Heart right ventricle (tissue), 16 donors: ENCODE measurements at regions of chr19 and their contacts with region 1.

Region 1: DNA sequence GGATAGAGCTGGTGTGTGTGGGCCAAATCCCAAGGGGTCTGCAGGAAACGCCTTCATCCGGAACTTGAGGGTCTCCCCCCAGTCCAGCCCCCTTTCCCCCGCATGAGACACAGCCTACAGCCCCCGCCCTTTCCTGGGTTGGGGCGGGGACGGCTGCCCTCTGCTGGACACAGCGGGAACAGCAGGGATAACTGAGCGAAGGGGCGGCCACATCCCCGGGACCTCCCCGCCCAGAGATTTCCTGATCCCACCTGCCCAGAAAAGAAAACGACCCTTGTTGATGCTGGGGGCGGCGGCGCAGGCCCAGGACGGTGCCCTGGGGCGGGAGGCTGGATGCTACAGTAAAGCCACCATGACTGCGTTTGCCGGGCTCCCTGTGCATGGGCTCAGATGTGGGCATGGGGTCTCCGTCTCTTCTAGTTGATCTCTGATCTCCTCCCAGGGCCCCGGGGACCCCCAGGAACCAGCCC is 14.2 kb downstream of the ONECUT3 start:
- DNase-seq: peak; percentile 21 to 48
- ATAC-seq: peak in 7 of 8 donors; percentile 65 to 83 (median 73)
- H3K4me3 ChIP-seq: no peak overlapping the region
- H3K27ac ChIP-seq: no peak overlapping the region
- H3K4me1 ChIP-seq: peaks cover 0 to 6% (median 0%) of the 10 kb centered on the region in 9 donors
- H3K27me3 ChIP-seq: peaks cover 22 to 100% (median 98%) of the 10 kb centered on the region in 7 donors
- CTCF ChIP-seq: peak; percentile 81 to 97 (median 94)

Region 2: DNA sequence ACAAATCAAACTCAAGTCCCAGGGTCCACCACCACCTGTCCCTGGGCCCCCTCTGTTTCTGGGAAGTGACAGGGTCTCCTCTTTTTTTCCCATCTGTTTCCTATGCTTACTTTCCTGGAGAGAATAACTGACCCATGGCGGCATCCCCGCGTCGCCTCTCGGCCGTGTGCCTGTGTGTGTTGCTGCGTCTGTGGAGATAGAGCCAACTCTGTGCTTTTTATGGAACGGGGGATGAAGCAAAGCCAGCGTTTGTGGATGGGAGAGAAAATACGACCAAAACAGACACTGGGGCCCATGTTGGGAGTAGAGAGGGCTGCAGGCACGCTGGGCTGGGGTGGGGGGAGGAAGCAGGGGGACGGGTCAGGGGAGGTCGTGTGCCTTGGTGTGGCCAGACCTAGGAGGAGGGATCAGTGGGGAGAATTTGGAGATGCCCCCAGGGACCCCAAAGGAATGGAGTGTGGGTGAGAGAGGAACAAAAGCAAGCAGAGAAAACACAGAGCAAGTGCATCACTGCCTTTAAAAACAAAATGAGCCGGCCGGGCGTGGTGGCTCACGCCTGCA is 227.1 kb before region 1 on chr19:
- intact Hi-C with region 1: loop called in 5 of 10 experiments (anchors 5 to 10 kb)
- DNase-seq: no peak
- ATAC-seq: peak in 7 of 8 donors; percentile 43 to 79 (median 67)
- H3K4me3 ChIP-seq: no peak overlapping the region
- H3K27ac ChIP-seq: peak overlapping the region in 2 of 10 donors; percentile 44 to 58
- H3K4me1 ChIP-seq: peaks cover 0 to 22% (median 4%) of the 10 kb centered on the region in 9 donors
- H3K27me3 ChIP-seq: peaks cover 0 to 23% (median under 1%) of the 10 kb centered on the region in 7 donors
- CTCF ChIP-seq: no peak

Region 3: DNA sequence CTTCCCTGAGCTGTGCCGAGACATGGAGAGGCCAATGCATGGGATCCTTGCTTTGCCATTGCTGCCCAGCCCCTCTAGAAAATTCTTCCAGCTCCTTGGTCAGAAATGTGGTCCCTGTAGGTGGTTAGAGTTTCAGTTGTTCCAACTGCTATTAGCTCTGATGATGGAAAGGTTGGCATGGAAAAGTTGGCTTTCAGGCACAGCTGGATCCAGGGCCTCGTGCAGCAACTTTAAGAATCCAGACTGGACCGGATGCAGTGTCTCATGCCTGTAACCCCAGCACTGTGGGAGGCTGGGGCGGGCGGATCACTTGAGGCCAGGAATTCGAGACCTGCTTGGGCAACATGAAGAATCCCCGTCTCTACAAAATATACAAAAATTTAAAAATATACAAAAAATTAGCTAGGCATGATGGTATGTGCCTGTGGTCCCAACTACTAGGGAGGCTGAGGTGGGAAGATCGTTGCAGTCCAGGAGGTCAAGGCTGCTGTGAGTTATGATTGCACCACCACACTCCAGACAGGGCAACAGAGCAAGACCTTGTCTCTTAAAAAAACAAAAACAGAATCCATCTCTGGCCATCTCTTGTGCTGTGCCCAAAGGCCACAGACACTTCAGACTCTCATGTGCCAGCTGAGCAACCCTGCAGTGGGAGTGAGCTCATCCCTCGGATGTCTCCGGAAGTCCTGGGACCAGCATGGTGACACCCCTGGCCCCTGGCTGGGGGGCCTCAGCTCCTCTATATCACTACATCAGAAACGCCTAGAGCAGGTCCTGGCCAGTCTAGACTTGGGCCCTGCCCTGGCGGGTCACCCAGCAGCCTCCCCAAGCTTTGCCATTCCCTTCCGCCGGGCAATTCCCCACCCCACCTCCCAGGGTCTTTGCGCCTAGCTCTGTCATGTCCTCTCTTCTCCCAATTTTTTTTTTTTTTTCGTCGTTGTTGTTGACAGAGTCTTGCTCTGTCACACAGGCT is 216.1 kb before region 1 on chr19:
- intact Hi-C with region 1: loop called in 8 of 10 experiments (anchors 1 to 10 kb)
- DNase-seq: no peak
- ATAC-seq: no peak
- H3K4me3 ChIP-seq: no peak overlapping the region
- H3K27ac ChIP-seq: no peak overlapping the region
- H3K4me1 ChIP-seq: peaks cover 0 to 1% (median under 1%) of the 10 kb centered on the region in 9 donors
- H3K27me3 ChIP-seq: peaks cover 0 to 7% (median under 1%) of the 10 kb centered on the region in 7 donors
- CTCF ChIP-seq: no peak

Region 4: GRCh38 chr19:1605236-1606137 is 162.0 kb before region 1 on chr19 and contains the start of gene UQCR11:
- intact Hi-C with region 1: loop called in 1 of 10 experiments (anchors 10 kb)
- DNase-seq: peak; percentile 94 to 96
- ATAC-seq: peak; percentile 94 to 98 (median 97)
- H3K4me3 ChIP-seq: peak within 1 kb of the TSS; percentile 92 to 100 (median 96)
- H3K27ac ChIP-seq: peak within 1 kb of the TSS; percentile 88 to 100 (median 97)
- H3K4me1 ChIP-seq: peaks cover 12 to 49% (median 35%) of the 10 kb centered on the region in 9 donors
- H3K27me3 ChIP-seq: no peaks in the 10 kb centered on the region
- CTCF ChIP-seq: peak; percentile 20 to 76 (median 59)
- total RNA-seq, gene UQCR11: 569 to 1,132 (median 804) TPM

Region 5: DNA sequence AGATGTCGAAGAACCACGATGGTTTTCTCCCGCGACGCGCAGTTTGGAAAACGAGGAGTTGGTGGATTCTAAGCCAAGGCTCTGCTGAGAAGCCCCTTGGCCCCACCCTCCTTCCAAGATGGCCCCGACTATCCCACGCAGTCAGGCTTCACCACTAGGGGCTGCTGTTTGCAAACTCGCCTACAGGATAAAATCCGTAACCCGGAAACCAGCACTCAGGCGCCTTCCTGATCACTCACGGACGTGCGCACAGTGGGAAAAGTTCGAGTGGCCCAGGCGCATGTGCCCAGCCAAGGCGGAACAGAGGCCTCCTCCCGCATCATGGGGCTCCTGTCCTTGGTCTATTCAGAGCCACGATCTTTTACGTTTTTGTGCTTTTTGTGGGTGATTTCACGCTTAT is 143.0 kb before region 1 on chr19:
- intact Hi-C with region 1: loop called in 1 of 10 experiments (anchors 5 kb)
- DNase-seq: peak; percentile 48 to 50
- ATAC-seq: peak in 6 of 8 donors; percentile 35 to 73 (median 59)
- H3K4me3 ChIP-seq: no peak overlapping the region
- H3K27ac ChIP-seq: no peak overlapping the region
- H3K4me1 ChIP-seq: no peaks in the 10 kb centered on the region
- H3K27me3 ChIP-seq: no peaks in the 10 kb centered on the region
- CTCF ChIP-seq: peak in 7 of 9 donors; percentile 46 to 64 (median 54)

Region 6: GRCh38 chr19:1725100-1726064 is 42.1 kb before region 1 on chr19:
- intact Hi-C with region 1: no loop called
- DNase-seq: peak in 1 of 2 donors; percentile 60
- ATAC-seq: peak in 5 of 8 donors; percentile 51 to 88 (median 62)
- H3K4me3 ChIP-seq: peak overlapping the region in 9 of 10 donors; percentile 32 to 54 (median 47)
- H3K27ac ChIP-seq: no peak overlapping the region
- H3K4me1 ChIP-seq: peaks cover 0 to 10% (median 6%) of the 10 kb centered on the region in 9 donors
- H3K27me3 ChIP-seq: peaks cover 0 to 96% (median 82%) of the 10 kb centered on the region in 7 donors
- CTCF ChIP-seq: no peak

Region 7: DNA sequence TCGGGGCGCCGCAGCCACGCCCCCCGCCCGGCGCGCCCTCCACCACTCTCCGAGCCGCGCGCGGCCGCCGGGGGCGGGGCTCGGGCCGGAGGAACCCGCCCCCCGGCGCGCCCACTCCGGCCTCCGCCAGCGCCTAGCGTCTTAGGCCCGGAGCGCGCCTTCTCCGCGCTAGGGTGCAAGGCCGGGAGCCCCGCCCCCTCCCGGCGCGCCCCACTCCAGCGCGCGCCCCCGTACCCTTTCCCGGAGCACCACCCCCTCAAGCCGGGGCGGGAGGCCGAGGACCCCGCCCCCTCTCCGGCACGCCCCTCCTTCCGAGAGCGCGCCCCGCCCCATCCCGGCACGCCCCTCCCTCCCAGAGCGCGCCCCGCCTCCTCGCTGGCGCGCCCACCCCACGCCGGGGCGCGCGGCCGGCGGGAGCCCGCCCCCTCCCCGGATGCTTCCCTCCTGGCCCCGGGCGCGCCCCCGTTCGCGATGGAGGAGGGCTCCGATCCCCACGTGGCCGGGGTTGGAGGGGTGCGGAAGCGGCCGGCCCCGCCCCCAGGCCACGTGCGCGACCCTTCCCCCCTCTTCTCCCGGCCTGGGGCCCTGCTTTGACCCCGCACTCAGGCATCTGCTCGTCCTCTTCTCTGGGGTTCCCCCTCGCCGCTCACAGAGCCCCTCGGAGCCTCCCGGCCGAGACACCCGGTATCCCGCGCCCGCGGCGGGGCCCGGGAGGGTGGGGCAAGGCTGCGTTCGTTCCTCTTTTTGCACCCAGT is 96.4 kb after region 1 on chr19:
- intact Hi-C with region 1: no loop called
- DNase-seq: peak; percentile 90 to 91
- ATAC-seq: peak; percentile 82 to 87 (median 84)
- H3K4me3 ChIP-seq: peak overlapping the region; percentile 42 to 96 (median 82)
- H3K27ac ChIP-seq: peak overlapping the region; percentile 21 to 99 (median 94)
- H3K4me1 ChIP-seq: peaks cover 18 to 48% (median 36%) of the 10 kb centered on the region in 9 donors
- H3K27me3 ChIP-seq: no peaks in the 10 kb centered on the region
- CTCF ChIP-seq: no peak